ENCODE measurements at regions of chr7 and their contacts with region 1.

Region 1: DNA sequence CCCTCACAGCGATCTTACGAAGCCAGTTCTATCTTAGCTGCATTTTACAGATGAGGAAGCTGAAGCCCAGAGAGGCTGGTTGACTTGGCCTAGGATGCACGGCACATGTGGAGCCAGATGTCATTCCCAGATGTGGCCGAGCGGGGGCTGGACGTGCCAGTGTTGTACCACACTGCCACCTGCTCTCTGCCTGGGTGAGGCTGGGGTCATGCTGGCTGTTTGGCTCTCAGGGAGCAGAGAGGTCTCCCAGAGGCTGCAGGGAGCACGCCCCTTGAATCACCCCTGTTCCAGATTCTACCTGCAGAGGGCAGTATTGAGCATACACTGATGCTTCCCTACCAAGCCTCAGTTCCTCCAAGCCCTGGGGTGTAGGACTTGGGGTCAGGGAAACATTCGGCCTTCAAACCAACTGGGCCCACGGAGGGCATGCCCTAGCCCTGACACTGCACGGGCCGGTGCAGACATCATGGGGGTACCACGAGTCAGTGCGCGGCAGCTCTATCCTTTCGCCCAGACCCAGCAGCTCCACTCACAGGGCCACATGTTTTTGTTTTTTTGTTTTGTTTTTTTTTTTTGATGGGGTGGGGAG is 3.8 kb upstream of the GTF2IRD1 start:
- H3K4me3 Mint-ChIP-seq: no peak overlapping the region
- H3K27ac Mint-ChIP-seq: no peak overlapping the region
- H3K4me1 Mint-ChIP-seq: peaks cover 21% of the 10 kb centered on the region
- H3K27me3 Mint-ChIP-seq: peaks cover 37% of the 10 kb centered on the region

Region 2: DNA sequence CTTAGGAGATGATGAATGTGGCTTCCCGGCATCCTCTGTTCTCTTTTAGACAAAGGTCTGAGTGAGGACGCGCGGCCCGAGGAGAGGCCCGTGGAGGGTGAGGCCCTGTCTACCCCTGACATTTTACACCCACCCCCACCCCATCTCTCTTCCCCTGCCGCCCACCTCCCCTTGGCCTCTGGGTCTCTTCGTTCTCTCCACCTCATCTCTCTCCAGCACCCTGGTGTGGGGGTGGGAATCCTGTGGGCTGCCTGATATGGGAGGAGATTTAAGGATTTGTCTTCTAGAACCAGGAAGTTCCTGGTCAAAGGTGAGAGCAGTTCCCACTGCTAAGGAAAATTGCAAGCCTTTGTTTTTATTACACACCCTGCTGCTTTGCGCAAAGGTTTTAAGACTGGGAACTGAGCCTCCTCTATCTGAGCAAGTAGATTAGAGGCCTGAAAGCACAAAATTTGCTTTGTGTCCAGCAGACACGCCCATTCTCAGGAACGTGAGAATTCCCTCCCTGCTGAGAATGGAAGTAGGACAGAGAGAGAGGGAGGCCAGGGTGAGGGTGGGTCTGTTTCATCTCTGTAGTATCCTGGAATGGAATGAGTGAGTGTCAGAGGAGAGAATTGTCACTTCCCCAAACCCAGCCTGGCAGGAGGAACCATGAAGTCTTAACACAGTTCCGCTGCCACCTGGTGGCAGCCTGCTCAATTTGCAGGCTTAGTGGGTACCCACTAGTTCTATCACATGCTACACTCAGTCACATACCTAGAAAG is 95.0 kb after region 1 on chr7:
- intact Hi-C with region 1: loop called (anchors 2 kb)
- H3K4me3 Mint-ChIP-seq: no peak overlapping the region
- H3K27ac Mint-ChIP-seq: no peak overlapping the region
- H3K4me1 Mint-ChIP-seq: peaks cover 6% of the 10 kb centered on the region
- H3K27me3 Mint-ChIP-seq: no peaks in the 10 kb centered on the region